A549 (cell line): ENCODE measurements at regions of chr4 and their contacts with region 1.

Region 1: DNA sequence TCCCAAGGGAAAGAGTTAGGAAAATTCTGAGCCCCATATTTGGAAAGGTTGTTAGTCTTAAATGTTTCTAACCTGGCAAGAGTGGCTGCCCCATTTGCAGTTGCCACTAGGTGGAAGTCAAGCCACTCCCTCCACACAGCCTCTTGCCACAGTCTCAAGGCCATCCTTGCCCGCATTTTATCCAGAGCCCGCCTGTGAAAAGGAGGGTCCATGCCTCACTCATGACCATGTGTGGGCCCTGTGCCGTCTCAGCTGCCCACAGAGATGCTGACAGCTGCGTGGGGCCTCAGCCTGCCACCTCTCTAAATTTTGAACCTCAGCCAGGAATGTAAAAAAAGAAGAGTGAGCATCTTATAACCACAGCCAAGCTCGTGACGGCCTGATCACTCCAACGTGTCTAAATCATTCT is 201.5 kb upstream of the FAM241A start:
- DNase-seq: peak; percentile 23 to 65
- ATAC-seq: peak; percentile 92 to 95
- H3K4me3 ChIP-seq: no peak overlapping the region
- H3K27ac ChIP-seq: no peak overlapping the region
- H3K4me1 ChIP-seq: no peaks in the 10 kb centered on the region
- CTCF ChIP-seq: peak; percentile 51
- EP300 ChIP-seq: no peak
- POLR2A ChIP-seq: no peak
- RAD21 ChIP-seq: peak; percentile 73 to 79

Region 2: DNA sequence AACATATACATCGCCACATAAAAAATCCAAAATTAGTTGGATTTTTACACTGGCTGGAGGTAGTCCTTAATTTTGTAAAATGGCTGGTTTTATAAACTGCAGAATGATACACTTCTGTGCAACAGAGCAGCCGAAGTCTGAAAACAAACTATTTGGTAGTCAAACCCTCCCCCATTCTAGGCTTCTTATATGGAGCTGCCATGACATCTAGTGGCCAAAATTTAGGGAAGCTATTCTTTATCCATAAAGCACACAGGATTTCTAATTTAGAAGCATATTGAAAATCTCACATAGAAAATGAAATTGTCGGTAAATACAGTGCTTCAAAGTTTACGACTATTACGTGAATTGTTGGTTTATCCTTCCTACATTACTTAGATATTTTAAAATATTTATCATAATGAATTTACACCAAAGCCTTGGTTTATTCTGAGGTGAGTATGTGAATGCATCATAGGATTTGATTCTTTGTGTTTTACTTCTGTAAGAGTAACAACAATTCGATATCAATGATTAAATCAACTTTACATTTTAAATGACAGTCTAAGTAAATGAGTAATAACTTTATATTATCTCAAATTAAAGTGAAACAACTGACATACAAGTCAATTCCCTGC is 88.0 kb after region 1 on chr4:
- CTCF ChIA-PET with region 1: interaction called, 20 read pairs
- POLR2A ChIA-PET with region 1: no interaction called
- DNase-seq: peak; percentile 7 to 44
- ATAC-seq: peak in 1 of 2 experiments; percentile 71; a peak in 4 of 6 replicates
- H3K4me3 ChIP-seq: no peak overlapping the region
- H3K27ac ChIP-seq: no peak overlapping the region
- H3K4me1 ChIP-seq: no peaks in the 10 kb centered on the region
- CTCF ChIP-seq: peak; percentile 80
- EP300 ChIP-seq: no peak
- POLR2A ChIP-seq: no peak
- RAD21 ChIP-seq: peak; percentile 85 to 89